HEK293 (cell line): ENCODE measurements at regions of chr17 and their contacts with region 1.

Region 1: GRCh38 chr17:32755045-32755805 is 121.7 kb downstream of the MYO1D start:
- H3K4me3 ChIP-seq: no peak overlapping the region
- H3K27ac ChIP-seq: no peak overlapping the region
- H3K4me1 ChIP-seq: no peaks in the 10 kb centered on the region
- CTCF ChIP-seq: peak; percentile 26; the same call in 1 of the 2 replicates

Region 2: GRCh38 chr17:32486111-32486700 is 269.0 kb before region 1 on chr17:
- CTCF ChIA-PET with region 1: interaction called, 37 read pairs
- POLR2A ChIA-PET with region 1: interaction called, 3 read pairs
- H3K4me3 ChIP-seq: peak overlapping the region; percentile 57
- H3K27ac ChIP-seq: peak overlapping the region; percentile 80; the same call in 1 of the 2 replicates
- H3K4me1 ChIP-seq: peaks cover 31% of the 10 kb centered on the region
- CTCF ChIP-seq: no peak

Region 3: GRCh38 chr17:32732900-32733299 is 22.3 kb before region 1 on chr17:
- CTCF ChIA-PET with region 1: interaction called, 10 read pairs
- POLR2A ChIA-PET with region 1: no interaction called
- H3K4me3 ChIP-seq: no peak overlapping the region
- H3K27ac ChIP-seq: no peak overlapping the region
- H3K4me1 ChIP-seq: no peaks in the 10 kb centered on the region
- CTCF ChIP-seq: no peak

Region 4: DNA sequence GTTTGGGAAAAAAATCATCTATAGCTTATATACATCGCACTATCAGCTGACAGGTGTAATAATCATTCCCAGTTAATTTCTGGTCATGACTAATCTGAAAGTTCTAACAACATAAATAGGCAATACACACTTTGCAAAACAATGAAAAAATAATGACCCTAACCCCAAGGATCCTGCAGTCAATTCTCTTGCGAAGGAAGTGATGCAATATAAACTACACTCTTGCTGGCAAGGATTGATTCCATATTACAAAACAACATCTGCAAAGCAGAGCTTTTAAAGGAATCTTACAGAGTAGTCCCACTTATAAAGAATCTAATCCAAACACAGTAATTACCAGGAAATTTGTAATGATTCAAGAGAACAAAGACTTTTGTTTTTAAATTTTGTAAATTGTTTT is 48.3 kb after region 1 on chr17:
- CTCF ChIA-PET with region 1: no interaction called
- POLR2A ChIA-PET with region 1: no interaction called
- H3K4me3 ChIP-seq: no peak overlapping the region
- H3K27ac ChIP-seq: no peak overlapping the region
- H3K4me1 ChIP-seq: peaks cover 2% of the 10 kb centered on the region; the same call in 1 of the 2 replicates
- CTCF ChIP-seq: no peak

Region 5: GRCh38 chr17:32835291-32835761 is 80.1 kb after region 1 on chr17:
- CTCF ChIA-PET with region 1: no interaction called
- POLR2A ChIA-PET with region 1: no interaction called
- H3K4me3 ChIP-seq: no peak overlapping the region
- H3K27ac ChIP-seq: no peak overlapping the region
- H3K4me1 ChIP-seq: 0 out of 2 replicates have a peak, but pooled peaks cover 9% of the 10 kb centered on the region
- CTCF ChIP-seq: no peak